IMR-90 (cell line): ENCODE measurements at regions of chr2 and their contacts with region 1.

Region 1: DNA sequence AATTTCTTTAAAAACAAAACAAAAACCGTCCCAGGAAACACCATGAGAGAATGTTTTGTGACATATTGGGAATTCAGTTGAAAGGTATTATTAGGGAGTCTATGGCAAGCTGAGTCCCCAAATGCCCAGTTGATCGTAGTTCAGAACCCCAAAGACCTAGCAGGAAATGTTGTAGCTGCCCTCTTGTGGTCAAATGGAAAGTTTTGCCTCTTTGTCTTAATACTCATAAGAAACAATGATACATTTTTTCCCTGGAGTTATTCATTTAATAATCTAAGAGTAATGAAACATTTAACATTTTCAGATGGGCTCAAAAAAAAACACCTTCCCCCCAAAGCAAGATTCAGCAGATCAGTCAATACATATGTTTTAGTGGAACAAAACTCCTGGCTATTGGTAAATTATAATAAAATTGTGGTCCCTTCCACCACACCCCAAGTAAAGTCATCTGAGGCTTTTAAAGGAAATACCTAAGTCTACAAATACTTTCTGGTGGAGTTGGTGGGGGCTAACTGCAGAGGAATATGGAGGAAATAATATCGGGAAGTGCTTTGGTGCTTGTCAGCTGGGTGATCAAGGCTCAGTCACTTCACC is 37.8 kb upstream of the EFEMP1 start:
- DNase-seq: peak; percentile 66
- ATAC-seq: peak; percentile 73
- H3K4me3 ChIP-seq: no peak overlapping the region
- H3K27ac ChIP-seq: no peak overlapping the region
- H3K4me1 ChIP-seq: peaks cover 8% of the 10 kb centered on the region
- H3K27me3 ChIP-seq: no peaks in the 10 kb centered on the region
- CTCF ChIP-seq: peak; percentile 71
- POLR2A ChIP-seq: no peak
- RAD21 ChIP-seq: peak; percentile 74

Region 2: DNA sequence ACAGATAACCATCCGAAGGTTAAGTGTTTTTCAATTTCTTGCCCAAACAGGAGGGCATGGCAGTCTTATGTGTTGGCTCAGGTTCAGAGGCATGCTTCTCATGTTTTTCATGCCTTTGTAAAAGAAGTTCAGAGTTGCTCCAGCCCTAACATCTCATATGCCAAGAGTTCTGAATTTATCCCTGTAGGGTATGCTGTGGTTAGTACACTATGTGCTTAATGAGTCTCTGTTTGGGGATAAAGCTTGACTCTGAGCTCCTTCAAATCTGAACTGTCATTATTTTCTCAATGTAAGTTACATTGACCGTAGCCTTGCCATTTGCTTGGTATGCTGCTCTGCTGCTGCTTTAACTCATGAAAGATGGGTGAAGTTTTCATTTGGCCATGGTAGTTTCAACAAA is 199.9 kb before region 1 on chr2:
- CTCF ChIA-PET with region 1: no interaction called
- POLR2A ChIA-PET with region 1: no interaction called
- dilution Hi-C with region 1: no loop called
- in situ Hi-C with region 1: loop called (anchors 5 kb)
- intact Hi-C with region 1: no loop called
- DNase-seq: peak; percentile 23
- ATAC-seq: peak; percentile 62
- H3K4me3 ChIP-seq: no peak overlapping the region
- H3K27ac ChIP-seq: no peak overlapping the region; the same call in 1 of the 2 replicates
- H3K4me1 ChIP-seq: peaks cover 2% of the 10 kb centered on the region; the same call in 1 of the 2 replicates
- H3K27me3 ChIP-seq: no peaks in the 10 kb centered on the region
- CTCF ChIP-seq: no peak
- POLR2A ChIP-seq: no peak
- RAD21 ChIP-seq: no peak

Region 3: GRCh38 chr2:55779459-55780421 is 181.7 kb before region 1 on chr2:
- CTCF ChIA-PET with region 1: no interaction called
- POLR2A ChIA-PET with region 1: no interaction called
- dilution Hi-C with region 1: no loop called
- in situ Hi-C with region 1: no loop called
- intact Hi-C with region 1: loop called (anchors 2 kb)
- DNase-seq: peak; percentile 82
- ATAC-seq: peak; percentile 57
- H3K4me3 ChIP-seq: no peak overlapping the region
- H3K27ac ChIP-seq: no peak overlapping the region; the same call in 1 of the 2 replicates
- H3K4me1 ChIP-seq: peaks cover 5% of the 10 kb centered on the region; the same call in 1 of the 2 replicates
- H3K27me3 ChIP-seq: no peaks in the 10 kb centered on the region
- CTCF ChIP-seq: no peak
- POLR2A ChIP-seq: no peak
- RAD21 ChIP-seq: no peak